AG04450 (cell line): ENCODE measurements at regions of chr10 and their contacts with region 1.

Region 1: GRCh38 chr10:130190055-130190736 is 54.0 kb downstream of the GLRX3 start:
- DNase-seq: peak; percentile 51
- H3K4me3 ChIP-seq: peak overlapping the region; percentile 68
- H3K27ac ChIP-seq: no peak overlapping the region
- H3K27me3 ChIP-seq: no peaks in the 10 kb centered on the region
- CTCF ChIP-seq: peak; percentile 82

Region 2: DNA sequence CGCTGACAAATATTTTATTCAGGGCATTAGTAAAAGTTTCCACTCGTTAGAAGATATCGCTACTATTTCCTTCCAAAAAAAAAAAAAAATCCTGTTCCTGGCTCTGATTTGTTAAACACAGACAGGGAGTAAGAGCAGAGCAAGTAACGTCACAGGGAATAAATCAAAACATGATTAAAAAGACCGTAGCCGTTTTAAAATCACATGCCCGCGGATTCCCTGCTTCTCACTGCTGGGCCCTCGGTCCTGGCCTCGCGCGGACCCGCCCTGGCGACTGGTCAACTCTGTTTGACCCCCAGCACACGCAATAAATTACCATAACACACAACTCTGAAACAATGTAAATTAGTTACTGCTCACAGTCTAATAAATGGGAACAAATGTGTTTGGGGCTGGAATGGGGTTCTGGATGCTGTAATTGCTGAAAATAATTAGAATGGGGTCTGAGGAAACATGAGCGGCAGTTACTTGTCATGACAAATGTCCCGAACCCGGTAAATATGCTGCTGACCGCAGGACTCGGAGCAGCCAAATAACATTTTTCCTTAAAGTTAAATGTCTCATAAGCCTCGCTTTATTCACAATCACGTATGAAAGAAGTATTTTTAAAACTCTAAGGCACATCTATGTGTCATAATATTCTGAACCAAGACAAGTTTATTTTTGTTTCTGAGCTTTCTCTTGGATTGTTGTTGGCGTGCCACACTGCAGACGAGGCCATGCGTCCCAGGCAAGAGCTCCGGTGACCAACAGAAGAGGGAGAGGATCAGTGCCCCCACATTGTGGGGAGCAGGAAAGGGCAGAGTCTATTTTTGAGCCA is 244.0 kb before region 1 on chr10:
- CTCF ChIA-PET with region 1: interaction called, 13 read pairs
- POLR2A ChIA-PET with region 1: no interaction called
- DNase-seq: no peak
- H3K4me3 ChIP-seq: no peak overlapping the region
- H3K27ac ChIP-seq: no peak overlapping the region
- H3K27me3 ChIP-seq: no peaks in the 10 kb centered on the region
- CTCF ChIP-seq: no peak

Region 3: GRCh38 chr10:129958148-129958628 is 232.0 kb before region 1 on chr10:
- CTCF ChIA-PET with region 1: no interaction called
- POLR2A ChIA-PET with region 1: no interaction called
- DNase-seq: no peak
- H3K4me3 ChIP-seq: no peak overlapping the region
- H3K27ac ChIP-seq: no peak overlapping the region
- H3K27me3 ChIP-seq: peaks cover 68% of the 10 kb centered on the region
- CTCF ChIP-seq: peak; percentile 15; the same call in 1 of the 2 replicates

Region 4: DNA sequence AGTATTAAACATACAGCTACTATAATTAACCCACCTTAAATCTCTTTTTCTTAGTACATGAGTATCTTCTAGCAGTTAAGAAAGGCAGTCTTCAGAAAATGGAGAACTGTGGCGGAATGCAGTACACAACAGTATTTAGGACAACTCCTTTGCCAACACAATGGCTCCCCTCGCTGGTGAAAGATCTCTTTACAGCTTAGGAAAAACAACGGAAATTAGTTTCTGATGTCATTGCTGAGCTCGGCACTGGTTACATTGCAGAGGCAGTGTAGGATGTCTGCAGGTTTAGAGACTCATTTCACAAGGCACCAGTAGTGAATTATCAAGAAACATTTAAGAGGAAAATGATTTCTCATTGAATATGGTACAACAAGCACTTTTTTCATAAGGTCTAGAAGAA is 10.6 kb before region 1 on chr10:
- CTCF ChIA-PET with region 1: interaction called, 23 read pairs
- POLR2A ChIA-PET with region 1: no interaction called
- DNase-seq: peak; percentile 24
- H3K4me3 ChIP-seq: no peak overlapping the region
- H3K27ac ChIP-seq: no peak overlapping the region
- H3K27me3 ChIP-seq: no peaks in the 10 kb centered on the region
- CTCF ChIP-seq: peak; percentile 62

Region 5: DNA sequence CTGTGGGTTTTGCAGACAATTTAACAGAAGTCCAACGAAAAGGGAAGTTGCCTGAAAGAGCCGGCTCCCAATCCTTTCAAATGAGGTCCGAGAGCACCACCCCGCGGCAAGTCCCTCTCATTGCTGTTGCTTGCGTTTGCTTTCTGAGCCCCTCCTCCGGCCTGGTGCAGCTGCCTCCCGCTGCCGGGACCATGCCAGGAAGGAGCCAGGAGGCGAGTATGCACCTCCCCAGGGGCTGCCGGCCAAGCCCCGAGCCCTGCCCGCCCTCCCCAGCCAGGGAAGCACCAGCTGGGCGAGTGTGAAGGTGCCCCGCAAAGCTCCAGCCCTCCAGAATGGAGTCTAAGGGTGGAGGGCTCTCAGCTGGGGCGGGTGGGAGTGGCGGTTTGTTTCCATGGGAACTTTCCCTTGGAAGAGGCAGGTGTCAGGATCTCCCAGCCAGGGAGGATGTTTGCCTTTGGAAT is 1684.8 kb after region 1 on chr10:
- CTCF ChIA-PET with region 1: interaction called, 26 read pairs
- POLR2A ChIA-PET with region 1: no interaction called
- DNase-seq: peak; percentile 52
- H3K4me3 ChIP-seq: no peak overlapping the region
- H3K27ac ChIP-seq: no peak overlapping the region
- H3K27me3 ChIP-seq: peaks cover 14% of the 10 kb centered on the region
- CTCF ChIP-seq: peak; percentile 78